ENCODE measurements at regions of chr1 and their contacts with region 1.

Region 1: DNA sequence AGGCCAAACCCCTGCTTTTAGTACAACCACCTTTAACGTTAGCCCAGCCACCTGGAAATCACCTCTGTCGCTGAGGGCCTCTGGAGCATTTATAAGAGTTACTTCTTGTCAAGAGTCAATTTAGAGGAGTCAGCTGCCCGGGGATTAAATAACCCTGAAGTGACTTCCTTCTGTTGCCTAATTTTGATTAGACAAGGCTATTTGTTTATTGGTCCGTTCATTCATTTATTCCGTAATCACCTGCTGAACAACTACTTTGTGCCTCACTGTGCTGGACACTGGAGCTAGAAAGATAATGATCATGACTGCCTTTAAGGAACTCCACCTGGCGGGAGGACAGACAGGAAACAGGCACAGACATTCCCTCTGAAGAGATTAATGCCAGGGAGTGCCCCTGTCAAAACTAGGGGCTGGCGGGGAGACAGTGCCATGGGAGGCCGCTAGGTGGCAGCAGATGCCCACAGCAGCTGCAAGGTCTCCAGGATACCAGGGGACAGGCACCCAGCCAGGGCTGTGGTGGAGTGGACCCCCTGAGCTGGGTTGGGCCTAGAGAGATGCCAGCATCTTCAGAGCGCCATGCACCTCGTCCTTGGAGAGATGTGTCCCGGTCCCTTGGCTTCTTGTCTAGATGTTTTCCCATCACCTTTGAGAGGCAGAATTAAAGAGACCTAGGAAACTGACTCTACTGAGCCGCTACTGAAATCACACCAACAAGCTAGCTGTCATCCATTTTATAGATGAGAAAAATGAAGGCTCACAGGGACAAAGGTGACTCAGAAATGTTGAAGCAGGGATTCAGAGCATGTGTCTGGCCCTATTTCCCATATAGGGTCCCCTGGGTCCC is 3.7 kb downstream of the REN start:
- DNase-seq: peak; percentile 63 to 100
- H3K4me3 ChIP-seq: no peak overlapping the region
- H3K27ac ChIP-seq: no peak overlapping the region
- H3K4me1 ChIP-seq: no peaks in the 10 kb centered on the region; a peak in 1 of 7 replicates
- H3K27me3 ChIP-seq: no peaks in the 10 kb centered on the region
- CTCF ChIP-seq: peak; percentile 99
- EP300 ChIP-seq: no peak
- POLR2A ChIP-seq: no peak
- RAD21 ChIP-seq: peak; percentile 100

Region 2: DNA sequence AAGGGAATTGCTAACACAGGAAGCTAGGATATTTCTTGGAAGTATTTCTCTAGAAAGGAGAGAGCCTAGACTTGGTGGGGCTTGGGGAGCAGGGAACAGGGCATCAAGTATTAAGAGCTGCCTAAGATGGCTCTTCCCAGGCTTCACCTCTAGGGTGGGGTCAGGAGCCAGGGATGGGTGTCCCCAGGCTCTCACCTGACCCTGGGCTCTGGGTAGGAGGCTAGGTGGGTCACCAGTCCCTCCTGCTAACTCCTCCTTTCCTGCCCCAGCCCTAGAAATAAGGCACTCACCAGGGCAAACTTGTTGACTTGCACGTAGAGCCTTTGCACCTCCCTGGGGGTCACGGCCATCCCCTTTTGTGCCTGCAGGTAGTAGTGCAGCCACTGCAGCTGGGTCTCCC is 25.6 kb before region 1 on chr1:
- CTCF ChIA-PET with region 1: interaction called, 26 read pairs
- POLR2A ChIA-PET with region 1: interaction called, 3 read pairs
- DNase-seq: no peak
- H3K4me3 ChIP-seq: no peak overlapping the region
- H3K27ac ChIP-seq: no peak overlapping the region
- H3K4me1 ChIP-seq: peaks cover 0 to 2% (median under 1%) of the 10 kb centered on the region in 4 experiments; a peak in 2 of 7 replicates
- H3K27me3 ChIP-seq: no peaks in the 10 kb centered on the region; a peak in 1 of 7 replicates
- CTCF ChIP-seq: no peak
- EP300 ChIP-seq: no peak
- POLR2A ChIP-seq: peak; percentile 35 to 37; a peak in 1 of 3 replicates
- RAD21 ChIP-seq: peak; percentile 7 to 40; a peak in 3 of 4 replicates

Region 3: GRCh38 chr1:204190212-204191211 is 28.1 kb after region 1 on chr1:
- CTCF ChIA-PET with region 1: interaction called, 360 read pairs
- POLR2A ChIA-PET with region 1: interaction called, 4 read pairs
- DNase-seq: peak in 1 of 2 experiments; percentile 84
- H3K4me3 ChIP-seq: peak overlapping the region; percentile 20 to 57 (median 23)
- H3K27ac ChIP-seq: no peak overlapping the region
- H3K4me1 ChIP-seq: no peaks in the 10 kb centered on the region
- H3K27me3 ChIP-seq: peaks cover 0 to 8% (median 6%) of the 10 kb centered on the region in 4 experiments; a peak in 4 of 7 replicates
- CTCF ChIP-seq: no peak
- EP300 ChIP-seq: no peak
- POLR2A ChIP-seq: no peak
- RAD21 ChIP-seq: no peak

Region 4: GRCh38 chr1:204294371-204294770 is 131.9 kb after region 1 on chr1:
- CTCF ChIA-PET with region 1: no interaction called
- POLR2A ChIA-PET with region 1: no interaction called
- DNase-seq: no peak
- H3K4me3 ChIP-seq: no peak overlapping the region
- H3K27ac ChIP-seq: no peak overlapping the region
- H3K4me1 ChIP-seq: peaks cover 1 to 15% (median 6%) of the 10 kb centered on the region in 4 experiments
- H3K27me3 ChIP-seq: no peaks in the 10 kb centered on the region
- CTCF ChIP-seq: no peak
- EP300 ChIP-seq: no peak
- POLR2A ChIP-seq: no peak
- RAD21 ChIP-seq: no peak

Region 5: DNA sequence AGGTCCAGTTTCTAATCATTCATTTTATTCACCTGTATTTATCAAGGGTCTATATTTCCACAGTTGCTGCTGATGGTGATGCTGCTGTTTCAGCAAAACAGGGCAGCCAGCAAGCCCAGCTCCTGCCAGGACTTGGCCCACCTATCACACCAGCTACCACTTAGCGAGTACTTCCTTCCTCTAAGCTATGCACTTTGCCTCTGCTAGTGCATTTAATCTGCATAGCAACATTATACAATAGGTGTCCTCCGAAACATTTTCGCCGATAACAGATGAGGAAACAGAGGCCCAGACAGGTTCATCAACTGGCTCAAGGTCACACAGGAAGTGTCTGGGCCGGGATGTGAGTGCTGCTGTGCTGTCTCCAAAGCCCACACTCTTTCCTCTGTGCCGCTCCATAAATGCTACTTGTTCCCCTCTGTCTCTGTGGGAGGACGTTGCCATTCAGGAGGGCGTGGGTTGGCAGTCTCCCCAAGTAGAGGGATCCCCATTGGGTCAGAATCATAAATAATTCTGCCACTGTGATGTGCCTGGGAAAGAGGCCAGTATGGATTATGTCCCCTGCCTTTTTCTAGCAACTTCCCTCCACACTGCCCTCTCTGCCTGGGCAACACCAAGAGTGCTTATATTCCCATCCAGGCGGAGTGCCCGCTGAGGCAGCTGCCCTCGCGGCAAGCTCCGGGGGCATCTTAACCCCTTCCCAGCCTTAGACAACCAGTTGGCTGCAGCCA is 206.7 kb after region 1 on chr1:
- CTCF ChIA-PET with region 1: interaction called, 66 read pairs
- POLR2A ChIA-PET with region 1: no interaction called
- DNase-seq: no peak
- H3K4me3 ChIP-seq: no peak overlapping the region
- H3K27ac ChIP-seq: no peak overlapping the region
- H3K4me1 ChIP-seq: no peaks in the 10 kb centered on the region
- H3K27me3 ChIP-seq: peaks cover 0 to 4% (median 0%) of the 10 kb centered on the region in 4 experiments; a peak in 1 of 7 replicates
- CTCF ChIP-seq: no peak
- EP300 ChIP-seq: no peak
- POLR2A ChIP-seq: no peak
- RAD21 ChIP-seq: no peak